Activated CD8-positive, alpha-beta T cell treated with anti-CD3 and anti-CD28 coated beads for 36 hours (primary cell): ENCODE measurements at regions of chr18 and their contacts with region 1.

Region 1: DNA sequence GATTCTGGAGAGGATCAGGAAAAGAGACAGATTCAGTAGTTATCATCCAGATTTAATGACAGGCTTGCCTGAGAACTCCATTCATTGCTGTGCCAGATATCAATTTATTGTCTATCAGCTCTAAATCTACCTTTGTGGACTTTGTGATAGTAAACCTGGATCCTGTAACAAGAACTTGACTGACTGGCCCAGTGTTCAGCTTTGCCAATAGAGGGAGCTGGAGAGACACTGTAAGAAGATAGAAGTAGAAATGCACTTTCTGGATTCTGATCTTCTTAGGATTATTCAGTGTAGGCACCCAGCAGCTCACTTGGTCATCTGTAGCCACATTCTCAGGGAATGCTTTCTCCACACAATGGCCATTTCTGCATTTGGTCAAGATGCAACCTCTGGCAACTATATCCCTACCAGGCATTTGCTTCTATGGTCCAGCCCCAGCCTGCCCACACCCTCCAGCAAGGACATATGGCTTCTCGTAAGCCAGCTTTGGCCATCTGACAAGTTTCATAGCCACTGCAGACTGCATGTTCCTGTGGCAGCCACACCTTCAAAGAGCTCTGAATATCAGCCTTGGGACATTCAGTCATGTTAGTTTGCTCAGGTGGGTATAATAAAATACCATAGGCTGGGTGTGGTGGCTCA is 6.1 kb upstream of the SERPINB8 start:
- DNase-seq: peak; percentile 49
- ATAC-seq: peak; percentile 80
- H3K4me3 Mint-ChIP-seq: no peak overlapping the region
- H3K27ac Mint-ChIP-seq: no peak overlapping the region
- H3K4me1 Mint-ChIP-seq: no peaks in the 10 kb centered on the region
- H3K27me3 Mint-ChIP-seq: peaks cover 26% of the 10 kb centered on the region
- CTCF ChIP-seq: peak; percentile 75

Region 2: GRCh38 chr18:63936156-63936931 is 27.4 kb before region 1 on chr18:
- CTCF ChIA-PET with region 1: interaction called, 14 read pairs
- POLR2A ChIA-PET with region 1: no interaction called
- intact Hi-C with region 1: no loop called
- DNase-seq: peak; percentile 78
- ATAC-seq: peak; percentile 97
- H3K4me3 Mint-ChIP-seq: peak overlapping the region; percentile 56
- H3K27ac Mint-ChIP-seq: no peak overlapping the region
- H3K4me1 Mint-ChIP-seq: no peaks in the 10 kb centered on the region
- H3K27me3 Mint-ChIP-seq: peaks cover 13% of the 10 kb centered on the region
- CTCF ChIP-seq: peak; percentile 51

Region 3: GRCh38 chr18:63949068-63949737 is 14.5 kb before region 1 on chr18 and contains the start of gene HMSD:
- CTCF ChIA-PET with region 1: interaction called, 37 read pairs
- POLR2A ChIA-PET with region 1: no interaction called
- intact Hi-C with region 1: no loop called
- DNase-seq: peak; percentile 73
- ATAC-seq: peak; percentile 84
- H3K4me3 Mint-ChIP-seq: peak within 1 kb of the TSS; percentile 57
- H3K27ac Mint-ChIP-seq: peak within 1 kb of the TSS; percentile 11
- H3K4me1 Mint-ChIP-seq: peaks cover 31% of the 10 kb centered on the region
- H3K27me3 Mint-ChIP-seq: peaks cover 31% of the 10 kb centered on the region
- CTCF ChIP-seq: peak; percentile 28
- total RNA-seq, gene HMSD: 1.4 to 1.6 TPM

Region 4: GRCh38 chr18:63979409-63979920 is 15.7 kb after region 1 on chr18:
- CTCF ChIA-PET with region 1: interaction called, 52 read pairs
- POLR2A ChIA-PET with region 1: interaction called, 3 read pairs
- intact Hi-C with region 1: loop called (anchors 1 kb)
- DNase-seq: peak; percentile 59
- ATAC-seq: peak; percentile 81
- H3K4me3 Mint-ChIP-seq: no peak overlapping the region
- H3K27ac Mint-ChIP-seq: no peak overlapping the region
- H3K4me1 Mint-ChIP-seq: peaks cover 12% of the 10 kb centered on the region
- H3K27me3 Mint-ChIP-seq: no peaks in the 10 kb centered on the region
- CTCF ChIP-seq: peak; percentile 80

Region 5: DNA sequence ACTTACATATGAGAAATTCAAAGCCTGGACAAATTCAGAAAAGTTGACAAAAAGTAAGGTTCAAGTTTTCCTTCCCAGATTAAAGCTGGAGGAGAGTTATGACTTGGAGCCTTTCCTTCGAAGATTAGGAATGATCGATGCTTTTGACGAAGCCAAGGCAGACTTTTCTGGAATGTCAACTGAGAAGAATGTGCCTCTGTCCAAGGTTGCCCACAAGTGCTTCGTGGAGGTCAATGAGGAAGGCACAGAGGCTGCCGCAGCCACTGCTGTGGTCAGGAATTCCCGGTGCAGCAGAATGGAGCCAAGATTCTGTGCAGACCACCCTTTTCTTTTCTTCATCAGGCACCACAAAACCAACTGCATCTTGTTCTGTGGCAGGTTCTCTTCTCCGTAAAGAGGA is 23.1 kb after region 1 on chr18:
- CTCF ChIA-PET with region 1: interaction called, 13 read pairs
- POLR2A ChIA-PET with region 1: interaction called, 3 read pairs
- intact Hi-C with region 1: no loop called
- DNase-seq: no peak
- ATAC-seq: no peak
- H3K4me3 Mint-ChIP-seq: no peak overlapping the region
- H3K27ac Mint-ChIP-seq: no peak overlapping the region
- H3K4me1 Mint-ChIP-seq: no peaks in the 10 kb centered on the region
- H3K27me3 Mint-ChIP-seq: no peaks in the 10 kb centered on the region
- CTCF ChIP-seq: no peak

Region 6: GRCh38 chr18:63994783-63995399 is 31.2 kb after region 1 on chr18:
- CTCF ChIA-PET with region 1: interaction called, 31 read pairs
- POLR2A ChIA-PET with region 1: no interaction called
- intact Hi-C with region 1: no loop called
- DNase-seq: peak; percentile 57
- ATAC-seq: peak; percentile 13
- H3K4me3 Mint-ChIP-seq: no peak overlapping the region
- H3K27ac Mint-ChIP-seq: no peak overlapping the region
- H3K4me1 Mint-ChIP-seq: peaks cover 2% of the 10 kb centered on the region
- H3K27me3 Mint-ChIP-seq: no peaks in the 10 kb centered on the region
- CTCF ChIP-seq: peak; percentile 90